Activated CD4-positive, alpha-beta memory T cell treated with anti-CD3 and anti-CD28 coated beads for 36 hours (primary cell): ENCODE measurements at regions of chr4 and their contacts with region 1.

Region 1: DNA sequence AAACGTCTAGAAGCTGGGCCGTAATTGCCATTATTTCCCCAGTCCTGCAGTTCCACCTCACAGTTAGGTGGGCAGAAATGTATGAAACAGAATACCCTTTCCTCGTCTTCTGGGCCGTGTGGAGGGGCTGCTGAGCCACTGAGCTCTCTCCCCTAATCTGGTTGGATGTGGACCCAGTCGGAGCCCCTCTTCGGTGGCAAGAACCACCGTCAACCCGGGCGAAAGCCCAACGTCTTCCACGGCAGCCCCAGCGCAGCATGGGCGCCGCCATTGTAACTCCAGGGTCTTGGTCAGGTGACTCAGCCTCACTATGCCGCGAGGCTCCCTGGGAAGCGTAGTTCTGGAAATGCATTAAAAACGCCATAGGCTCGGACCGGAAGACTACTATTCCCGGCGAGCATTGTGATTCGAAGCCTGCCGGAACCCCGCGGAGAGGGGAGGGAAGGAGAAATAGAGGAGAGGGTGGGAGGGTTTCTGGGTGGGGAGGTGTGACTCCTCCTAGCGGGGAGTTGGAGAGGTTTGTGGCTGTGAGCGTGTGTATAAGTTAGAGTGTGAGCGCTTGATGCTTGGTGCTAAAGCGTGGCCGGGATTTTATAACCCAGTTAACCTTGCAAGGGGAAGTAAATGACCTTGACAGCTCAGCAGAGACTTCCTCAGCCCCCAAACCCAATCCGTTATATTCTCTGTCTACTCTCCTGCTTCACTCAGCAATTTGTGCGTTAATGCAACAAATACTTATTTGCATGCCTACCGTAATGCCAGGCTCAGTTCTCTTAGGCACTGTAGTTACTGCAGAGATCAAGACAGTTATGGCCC is at the start of gene GATB:
- DNase-seq: peak; percentile 95
- H3K4me3 Mint-ChIP-seq: peak within 1 kb of the TSS; percentile 91
- H3K27ac Mint-ChIP-seq: peak within 1 kb of the TSS; percentile 64
- H3K4me1 Mint-ChIP-seq: peaks cover 13% of the 10 kb centered on the region
- H3K27me3 Mint-ChIP-seq: no peaks in the 10 kb centered on the region
- total RNA-seq, gene GATB: 16.1 to 16.5 TPM

Region 2: GRCh38 chr4:151408630-151409469 is 352.1 kb before region 1 on chr4 and contains the start of gene FHIP1A:
- CTCF ChIA-PET with region 1: no interaction called
- POLR2A ChIA-PET with region 1: no interaction called
- intact Hi-C with region 1: loop called (anchors 1 kb)
- DNase-seq: peak; percentile 88
- H3K4me3 Mint-ChIP-seq: peak within 1 kb of the TSS; percentile 86
- H3K27ac Mint-ChIP-seq: peak within 1 kb of the TSS; percentile 65
- H3K4me1 Mint-ChIP-seq: peaks cover 22% of the 10 kb centered on the region
- H3K27me3 Mint-ChIP-seq: peaks cover 15% of the 10 kb centered on the region
- total RNA-seq, gene FHIP1A: 0.45 to 0.46 TPM

Region 3: DNA sequence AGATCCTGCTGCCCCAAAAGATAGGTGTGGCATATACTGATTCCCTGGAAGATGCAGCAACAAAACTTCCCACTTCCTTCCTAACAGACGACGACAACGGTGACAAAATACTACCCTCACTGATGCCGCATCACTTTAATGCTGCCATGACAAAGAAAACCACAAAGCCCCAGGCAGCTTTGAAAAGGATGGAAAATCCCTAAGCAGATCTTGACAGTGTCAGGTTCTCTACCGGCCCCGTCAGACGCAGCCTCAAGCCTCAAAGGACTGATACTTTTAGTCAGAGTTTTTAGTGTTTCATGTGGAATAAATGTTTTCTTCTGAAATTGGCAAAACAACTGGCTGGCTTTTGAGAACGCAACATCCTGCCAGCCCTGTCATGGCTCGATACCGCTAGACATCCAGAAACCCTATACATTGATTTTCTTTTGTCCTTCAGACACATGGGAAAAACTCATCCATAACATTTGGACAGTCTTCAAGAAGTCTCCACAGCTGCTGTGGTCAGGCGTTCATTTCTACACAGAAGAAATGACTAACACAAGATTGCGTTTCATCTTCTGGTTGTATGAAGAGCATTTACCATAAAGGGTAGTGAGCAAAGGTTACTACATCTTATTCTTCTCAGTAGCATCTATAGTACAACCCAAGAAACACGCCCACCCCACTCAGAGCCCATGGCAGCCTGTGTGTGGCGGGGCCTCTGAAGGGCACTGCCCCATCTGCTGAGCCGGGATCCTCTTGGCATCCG is 60.2 kb before region 1 on chr4:
- CTCF ChIA-PET with region 1: interaction called, 4 read pairs
- POLR2A ChIA-PET with region 1: no interaction called
- intact Hi-C with region 1: loop called (anchors 2 kb)
- DNase-seq: peak; percentile 63
- H3K4me3 Mint-ChIP-seq: no peak overlapping the region
- H3K27ac Mint-ChIP-seq: peak overlapping the region; percentile 75
- H3K4me1 Mint-ChIP-seq: peaks cover 8% of the 10 kb centered on the region
- H3K27me3 Mint-ChIP-seq: no peaks in the 10 kb centered on the region

Region 4: GRCh38 chr4:152106113-152106763 is 345.3 kb after region 1 on chr4:
- CTCF ChIA-PET with region 1: no interaction called
- POLR2A ChIA-PET with region 1: no interaction called
- intact Hi-C with region 1: loop called (anchors 10 kb)
- DNase-seq: peak; percentile 58
- H3K4me3 Mint-ChIP-seq: no peak overlapping the region
- H3K27ac Mint-ChIP-seq: peak overlapping the region; percentile 65
- H3K4me1 Mint-ChIP-seq: peaks cover 73% of the 10 kb centered on the region
- H3K27me3 Mint-ChIP-seq: no peaks in the 10 kb centered on the region